ENCODE measurements at regions of chr2 and their contacts with region 1.

Region 1: GRCh38 chr2:191165176-191165643 is 14.4 kb upstream of the STAT4 start:
- DNase-seq: peak; percentile 54
- ATAC-seq: peak; percentile 85
- H3K4me3 ChIP-seq: no peak overlapping the region
- H3K27ac ChIP-seq: peak overlapping the region; percentile 60; the same call in 1 of the 2 replicates
- H3K4me1 ChIP-seq: peaks cover 18% of the 10 kb centered on the region
- H3K27me3 ChIP-seq: no peaks in the 10 kb centered on the region
- CTCF ChIP-seq: peak; percentile 66; the same call in 1 of the 2 replicates

Region 2: GRCh38 chr2:191066197-191066918 is 98.9 kb before region 1 on chr2:
- CTCF ChIA-PET with region 1: no interaction called
- POLR2A ChIA-PET with region 1: no interaction called
- in situ Hi-C with region 1: no loop called
- intact Hi-C with region 1: no loop called
- DNase-seq: no peak
- ATAC-seq: no peak
- H3K4me3 ChIP-seq: no peak overlapping the region
- H3K27ac ChIP-seq: no peak overlapping the region
- H3K4me1 ChIP-seq: no peaks in the 10 kb centered on the region
- H3K27me3 ChIP-seq: peaks cover 6% of the 10 kb centered on the region
- CTCF ChIP-seq: no peak

Region 3: DNA sequence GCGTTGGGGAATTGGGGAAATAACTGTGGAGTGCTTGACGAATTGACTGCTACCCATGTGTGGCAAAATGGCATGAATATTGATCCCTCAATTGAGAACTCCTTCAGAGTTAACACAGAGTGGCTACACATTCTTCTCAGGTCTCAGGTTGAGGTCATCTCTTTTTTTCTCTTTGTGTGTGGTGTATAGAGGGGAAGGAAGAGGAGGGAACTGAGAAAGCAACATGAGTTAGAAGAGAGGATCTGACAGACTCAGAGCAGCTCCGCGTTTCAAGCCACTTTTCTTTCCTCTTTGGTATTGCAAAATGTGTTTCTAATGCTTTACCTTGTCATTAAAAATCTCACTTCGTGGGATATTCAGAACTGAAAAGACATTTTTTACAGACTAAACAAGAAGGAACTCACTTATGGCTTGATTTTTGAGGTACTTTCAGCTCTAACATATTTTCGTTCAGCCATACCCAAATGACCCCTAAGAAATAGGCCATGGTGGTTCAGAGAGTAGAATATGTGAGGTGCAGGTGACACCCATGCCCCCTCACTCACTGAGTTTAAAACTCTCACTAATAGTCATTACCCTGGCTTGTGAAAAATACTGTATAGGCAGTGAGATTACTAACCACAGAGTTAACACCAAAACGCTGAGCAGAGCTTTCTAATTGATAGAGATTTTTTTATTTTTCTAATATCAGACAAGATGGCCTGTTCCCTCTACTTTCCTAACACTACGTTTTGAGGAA is 36.9 kb before region 1 on chr2:
- CTCF ChIA-PET with region 1: no interaction called
- POLR2A ChIA-PET with region 1: no interaction called
- in situ Hi-C with region 1: no loop called
- intact Hi-C with region 1: no loop called
- DNase-seq: no peak
- ATAC-seq: no peak
- H3K4me3 ChIP-seq: no peak overlapping the region
- H3K27ac ChIP-seq: no peak overlapping the region
- H3K4me1 ChIP-seq: no peaks in the 10 kb centered on the region
- H3K27me3 ChIP-seq: no peaks in the 10 kb centered on the region; the same call in 1 of the 2 replicates
- CTCF ChIP-seq: no peak

Region 4: DNA sequence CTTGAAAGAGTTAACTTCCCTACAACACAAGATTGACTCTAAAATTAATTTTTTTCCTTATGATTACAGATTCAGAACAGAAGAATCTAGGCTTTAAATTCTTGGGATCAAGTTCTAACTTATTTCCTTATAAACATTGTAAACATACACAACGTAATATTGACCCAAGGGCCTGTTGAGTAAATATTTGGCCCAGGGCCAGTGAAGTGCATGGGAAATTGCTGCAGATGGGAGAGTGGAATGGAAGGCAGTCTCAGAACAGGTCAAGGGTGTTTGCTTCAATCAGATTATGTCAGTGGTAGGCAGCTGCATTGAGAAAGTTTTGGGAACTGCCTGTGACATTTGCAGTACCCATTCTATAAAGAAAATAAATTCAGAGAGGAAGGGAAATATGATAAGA is 217.6 kb after region 1 on chr2:
- CTCF ChIA-PET with region 1: no interaction called
- POLR2A ChIA-PET with region 1: no interaction called
- in situ Hi-C with region 1: no loop called
- intact Hi-C with region 1: loop called (anchors 10 kb)
- DNase-seq: no peak
- ATAC-seq: no peak
- H3K4me3 ChIP-seq: no peak overlapping the region
- H3K27ac ChIP-seq: no peak overlapping the region
- H3K4me1 ChIP-seq: no peaks in the 10 kb centered on the region
- H3K27me3 ChIP-seq: no peaks in the 10 kb centered on the region
- CTCF ChIP-seq: no peak

Region 5: GRCh38 chr2:191501561-191502168 is 336.5 kb after region 1 on chr2:
- CTCF ChIA-PET with region 1: interaction called, 5 read pairs
- POLR2A ChIA-PET with region 1: interaction called, 6 read pairs
- in situ Hi-C with region 1: no loop called
- intact Hi-C with region 1: loop called (anchors 5 kb)
- DNase-seq: no peak
- ATAC-seq: peak; percentile 78; the same call in 1 of the 2 replicates
- H3K4me3 ChIP-seq: no peak overlapping the region
- H3K27ac ChIP-seq: no peak overlapping the region
- H3K4me1 ChIP-seq: no peaks in the 10 kb centered on the region; the same call in 1 of the 2 replicates
- H3K27me3 ChIP-seq: no peaks in the 10 kb centered on the region
- CTCF ChIP-seq: peak; percentile 65; the same call in 1 of the 2 replicates

Region 6: GRCh38 chr2:191521608-191522208 is 356.5 kb after region 1 on chr2:
- CTCF ChIA-PET with region 1: interaction called, 4 read pairs
- POLR2A ChIA-PET with region 1: no interaction called
- in situ Hi-C with region 1: no loop called
- intact Hi-C with region 1: loop called (anchors 1 kb)
- DNase-seq: peak; percentile 51
- ATAC-seq: no peak
- H3K4me3 ChIP-seq: no peak overlapping the region
- H3K27ac ChIP-seq: no peak overlapping the region
- H3K4me1 ChIP-seq: no peaks in the 10 kb centered on the region
- H3K27me3 ChIP-seq: no peaks in the 10 kb centered on the region; the same call in 1 of the 2 replicates
- CTCF ChIP-seq: peak; percentile 81; the same call in 1 of the 2 replicates